ENCODE measurements at regions of chr2 and their contacts with region 1.

Region 1: DNA sequence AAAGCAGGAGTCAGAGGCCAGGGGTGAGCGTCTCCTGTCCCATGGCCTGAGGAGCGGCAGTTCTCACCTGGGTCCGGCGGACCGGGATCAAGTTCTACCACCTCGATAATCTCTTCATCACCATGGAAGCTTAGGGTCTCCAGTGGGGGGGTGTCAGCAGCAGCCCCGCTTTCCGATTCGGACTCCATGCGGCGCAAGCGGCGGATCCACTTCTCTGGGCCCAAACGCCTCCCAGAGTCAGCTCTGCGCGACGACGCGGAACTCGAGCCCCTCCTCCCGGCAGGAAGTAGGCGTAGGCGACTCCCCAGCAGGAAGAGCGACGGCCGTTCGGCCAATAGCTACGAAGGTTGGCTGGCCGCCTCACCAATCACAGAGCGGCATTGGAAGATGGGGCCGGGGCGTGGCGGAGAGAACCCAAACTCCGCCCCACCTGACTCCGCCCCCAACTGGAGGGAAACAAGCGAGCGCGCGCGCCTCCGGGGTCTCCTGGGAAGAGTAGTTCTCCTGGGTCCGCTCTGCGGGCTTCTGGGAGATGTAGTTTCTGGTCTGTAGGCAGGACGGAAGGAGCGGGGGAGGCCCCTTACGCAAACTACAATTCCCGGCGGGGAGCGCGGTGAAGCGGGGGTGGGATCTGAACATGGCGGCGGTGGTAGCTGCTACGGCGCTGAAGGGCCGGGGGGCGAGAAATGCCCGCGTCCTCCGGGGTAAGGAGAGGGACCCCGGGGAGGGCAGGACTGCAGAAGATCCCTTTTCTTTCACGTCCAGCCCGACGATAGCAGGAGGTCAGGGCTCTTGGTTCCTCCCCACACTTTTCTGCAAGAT is at the starts of genes AAMP and PNKD:
- DNase-seq: peak; percentile 100
- ATAC-seq: peak; percentile 92 to 96 (median 94)
- H3K4me3 ChIP-seq: peak within 1 kb of the TSS; percentile 54 to 95 (median 87)
- H3K27ac ChIP-seq: peak within 1 kb of the TSS; percentile 71 to 88 (median 80)
- H3K4me1 ChIP-seq: peaks cover 3 to 60% (median 43%) of the 10 kb centered on the region in 12 donors
- H3K27me3 ChIP-seq: no peaks in the 10 kb centered on the region
- CTCF ChIP-seq: peak in 8 of 12 donors; percentile 26 to 56 (median 36)
- POLR2A ChIP-seq: peak; percentile 15 to 89
- total RNA-seq, gene AAMP: 51.6 to 127 (median 58.0) TPM
- total RNA-seq, gene PNKD: 53.8 to 78.7 (median 72.5) TPM

Region 2: DNA sequence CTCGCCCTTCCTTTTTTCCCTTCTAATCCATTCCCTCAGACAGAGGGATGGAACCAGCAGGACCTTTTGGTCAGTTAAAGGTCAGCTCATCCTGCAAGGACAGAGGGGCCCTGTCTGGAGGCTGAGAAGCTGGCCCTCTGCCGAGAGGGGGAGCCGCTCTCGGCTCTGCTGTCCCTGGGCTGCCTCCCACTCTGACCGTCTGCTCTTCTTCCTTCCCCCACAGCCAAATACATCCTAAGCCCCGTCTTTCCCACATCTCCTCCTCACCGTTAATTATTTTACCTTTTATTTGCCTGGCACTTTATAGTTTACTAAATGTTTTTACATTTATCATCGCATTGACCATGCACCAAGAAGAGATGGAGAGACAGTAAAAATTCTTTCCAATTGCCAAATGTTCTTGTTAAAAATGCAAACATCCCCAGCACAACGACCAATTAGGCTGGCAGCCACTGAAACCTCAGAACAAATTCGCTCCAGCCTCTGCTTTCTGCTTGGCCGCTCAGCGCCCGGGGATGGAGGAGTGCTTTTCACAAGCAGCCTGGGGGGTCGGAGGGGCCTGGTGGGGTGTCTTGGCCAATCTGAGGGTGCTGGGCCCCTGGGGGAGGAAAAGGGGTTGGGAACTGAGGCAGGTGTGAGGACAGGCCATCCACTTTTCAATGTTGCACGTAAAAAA is 391.1 kb before region 1 on chr2:
- intact Hi-C with region 1: no loop called
- DNase-seq: no peak
- ATAC-seq: peak in 1 of 4 donors; percentile 21
- H3K4me3 ChIP-seq: no peak overlapping the region
- H3K27ac ChIP-seq: peak overlapping the region in 9 of 12 donors; percentile 14 to 74 (median 48)
- H3K4me1 ChIP-seq: peaks cover 0 to 80% (median 34%) of the 10 kb centered on the region in 12 donors
- H3K27me3 ChIP-seq: no peaks in the 10 kb centered on the region
- CTCF ChIP-seq: no peak
- POLR2A ChIP-seq: no peak

Region 3: DNA sequence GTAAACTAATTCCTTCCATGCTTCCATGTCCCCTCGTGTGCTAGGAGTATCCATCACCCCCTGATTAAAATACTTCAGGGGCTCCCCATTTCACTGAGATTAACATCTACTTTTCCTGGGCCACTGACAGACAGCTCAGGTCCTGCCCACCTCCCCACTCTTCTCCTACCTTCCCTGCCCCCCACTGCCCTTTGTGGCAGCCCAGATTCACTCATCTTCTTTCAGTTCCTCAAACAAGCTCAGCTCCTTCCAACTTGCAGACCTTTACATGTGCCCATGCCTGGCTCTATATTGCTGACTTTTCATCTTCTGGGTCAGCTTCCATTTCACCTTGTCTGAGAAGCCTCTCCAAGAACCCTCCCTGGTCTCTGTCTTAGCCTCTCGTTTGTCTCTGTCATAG is 189.0 kb before region 1 on chr2:
- intact Hi-C with region 1: no loop called
- DNase-seq: no peak
- ATAC-seq: no peak
- H3K4me3 ChIP-seq: no peak overlapping the region
- H3K27ac ChIP-seq: no peak overlapping the region
- H3K4me1 ChIP-seq: no peaks in the 10 kb centered on the region
- H3K27me3 ChIP-seq: peaks cover 0 to 3% (median 0%) of the 10 kb centered on the region in 9 donors
- CTCF ChIP-seq: no peak
- POLR2A ChIP-seq: no peak

Region 4: DNA sequence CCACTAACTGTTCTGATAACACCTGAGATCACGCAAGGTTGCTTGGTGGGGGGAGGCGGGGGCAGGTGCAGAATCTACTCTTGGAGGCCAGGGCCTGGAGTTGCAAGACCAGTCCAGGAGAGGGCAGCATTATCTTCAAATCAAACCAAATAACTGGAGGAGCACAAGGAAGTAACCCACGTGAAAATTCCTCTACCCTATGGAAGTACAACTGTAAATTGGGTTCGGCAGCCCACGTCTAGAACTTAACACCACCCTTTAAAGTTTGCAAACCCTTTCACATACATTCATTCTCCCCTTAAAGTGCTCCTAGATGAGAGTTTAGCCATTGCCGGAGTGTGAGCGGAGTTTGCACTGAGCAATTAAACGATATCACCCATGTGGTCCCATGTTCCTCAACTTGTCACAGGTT is 83.7 kb before region 1 on chr2:
- intact Hi-C with region 1: loop called in 4 of 10 experiments (anchors 2 to 5 kb)
- DNase-seq: peak in 4 of 5 donors; percentile 46 to 66 (median 58)
- ATAC-seq: peak; percentile 80 to 94 (median 92)
- H3K4me3 ChIP-seq: peak overlapping the region in 1 of 12 donors; percentile 19
- H3K27ac ChIP-seq: peak overlapping the region in 1 of 12 donors; percentile 52
- H3K4me1 ChIP-seq: peaks cover 0 to 11% (median 2%) of the 10 kb centered on the region in 12 donors
- H3K27me3 ChIP-seq: no peaks in the 10 kb centered on the region
- CTCF ChIP-seq: peak; percentile 69 to 85 (median 80)
- POLR2A ChIP-seq: no peak

Region 5: GRCh38 chr2:218223046-218223445 is 47.1 kb before region 1 on chr2:
- intact Hi-C with region 1: loop called in 2 of 10 experiments (anchors 1 to 10 kb)
- DNase-seq: no peak
- ATAC-seq: peak in 1 of 4 donors; percentile 35
- H3K4me3 ChIP-seq: peak overlapping the region in 1 of 12 donors; percentile 18
- H3K27ac ChIP-seq: peak overlapping the region in 1 of 12 donors; percentile 38
- H3K4me1 ChIP-seq: peaks cover 0 to 98% (median 50%) of the 10 kb centered on the region in 12 donors
- H3K27me3 ChIP-seq: no peaks in the 10 kb centered on the region
- CTCF ChIP-seq: no peak
- POLR2A ChIP-seq: no peak

Region 6: DNA sequence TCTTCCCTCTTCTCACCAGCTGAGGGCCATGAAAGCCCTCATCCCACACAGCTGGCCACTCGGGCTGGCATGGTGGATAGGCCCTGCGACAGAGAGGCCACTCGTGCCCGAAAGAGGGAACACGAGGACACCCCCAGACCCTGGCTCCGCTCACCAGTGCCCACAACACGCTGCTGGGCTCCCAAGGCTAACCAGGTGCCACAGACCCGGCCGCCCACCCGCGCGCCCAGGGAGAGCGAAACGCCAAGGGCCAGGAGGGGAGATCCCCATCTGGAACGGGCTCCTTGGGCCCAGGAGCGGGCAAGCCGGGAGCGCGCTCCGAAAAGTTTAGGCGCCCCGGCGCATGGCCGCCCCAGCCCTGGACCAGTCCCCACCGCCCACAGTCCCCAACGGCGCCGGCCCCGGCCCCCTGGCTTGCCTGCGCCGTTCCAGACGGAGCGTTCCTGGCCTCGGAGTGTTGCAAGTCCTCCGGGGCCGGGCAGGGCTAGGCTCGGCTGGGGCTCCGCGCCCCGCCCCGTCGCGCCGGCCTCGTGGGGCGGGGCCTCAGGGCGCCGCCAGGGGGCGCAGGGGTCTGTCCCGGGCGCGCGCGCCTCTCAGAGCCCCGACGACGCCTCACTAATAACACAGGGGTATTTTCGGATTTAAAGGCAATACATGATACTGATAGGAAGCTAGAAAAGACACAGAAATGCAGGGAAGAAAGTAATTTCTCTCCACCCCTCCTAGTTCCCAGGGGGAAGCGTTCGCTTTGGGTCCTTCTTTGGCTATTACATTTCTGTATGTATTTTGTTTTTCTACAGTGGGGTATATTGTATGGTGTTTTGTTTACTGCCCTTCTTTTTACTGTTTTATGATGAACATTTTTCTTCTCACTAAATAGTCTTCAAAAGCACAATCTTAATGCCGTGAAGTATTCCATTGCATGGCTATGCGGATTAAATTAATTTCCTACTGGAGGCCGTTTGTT is 22.2 kb after region 1 on chr2 and contains the start of gene TMBIM1:
- intact Hi-C with region 1: loop called in 6 of 10 experiments (anchors 1 to 2 kb)
- DNase-seq: peak; percentile 83 to 92 (median 87)
- ATAC-seq: peak; percentile 68 to 92 (median 86)
- H3K4me3 ChIP-seq: peak within 1 kb of the TSS; percentile 74 to 98 (median 90)
- H3K27ac ChIP-seq: peak within 1 kb of the TSS; percentile 90 to 100 (median 96)
- H3K4me1 ChIP-seq: peaks cover 2 to 71% (median 49%) of the 10 kb centered on the region in 12 donors
- H3K27me3 ChIP-seq: no peaks in the 10 kb centered on the region
- CTCF ChIP-seq: peak; percentile 63 to 99 (median 96)
- POLR2A ChIP-seq: peak; percentile 50 to 93
- total RNA-seq, gene TMBIM1: 89.1 to 173 (median 126) TPM

Region 7: DNA sequence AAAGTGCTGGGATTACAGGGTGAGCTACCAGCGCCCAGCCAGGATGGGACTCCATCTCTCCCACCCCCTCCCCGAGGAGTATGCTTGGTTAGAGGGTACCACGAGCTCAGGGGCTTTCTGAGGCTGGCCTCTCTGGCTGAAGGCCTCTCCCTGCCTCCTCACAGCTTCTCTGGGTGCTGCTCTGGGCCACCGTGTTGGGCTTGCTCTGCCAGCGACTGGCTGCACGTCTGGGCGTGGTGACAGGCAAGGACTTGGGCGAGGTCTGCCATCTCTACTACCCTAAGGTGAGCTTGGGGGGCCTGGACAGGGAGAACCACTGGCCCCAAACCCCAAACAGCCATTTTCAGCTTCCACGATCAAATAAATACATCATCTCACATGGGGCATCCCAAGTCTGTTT is 114.9 kb after region 1 on chr2:
- intact Hi-C with region 1: no loop called
- DNase-seq: peak in 1 of 5 donors; percentile 27
- ATAC-seq: no peak
- H3K4me3 ChIP-seq: peak overlapping the region in 1 of 12 donors; percentile 51
- H3K27ac ChIP-seq: no peak overlapping the region
- H3K4me1 ChIP-seq: peaks cover 0 to 23% (median 5%) of the 10 kb centered on the region in 12 donors
- H3K27me3 ChIP-seq: no peaks in the 10 kb centered on the region
- CTCF ChIP-seq: no peak
- POLR2A ChIP-seq: no peak

Region 8: DNA sequence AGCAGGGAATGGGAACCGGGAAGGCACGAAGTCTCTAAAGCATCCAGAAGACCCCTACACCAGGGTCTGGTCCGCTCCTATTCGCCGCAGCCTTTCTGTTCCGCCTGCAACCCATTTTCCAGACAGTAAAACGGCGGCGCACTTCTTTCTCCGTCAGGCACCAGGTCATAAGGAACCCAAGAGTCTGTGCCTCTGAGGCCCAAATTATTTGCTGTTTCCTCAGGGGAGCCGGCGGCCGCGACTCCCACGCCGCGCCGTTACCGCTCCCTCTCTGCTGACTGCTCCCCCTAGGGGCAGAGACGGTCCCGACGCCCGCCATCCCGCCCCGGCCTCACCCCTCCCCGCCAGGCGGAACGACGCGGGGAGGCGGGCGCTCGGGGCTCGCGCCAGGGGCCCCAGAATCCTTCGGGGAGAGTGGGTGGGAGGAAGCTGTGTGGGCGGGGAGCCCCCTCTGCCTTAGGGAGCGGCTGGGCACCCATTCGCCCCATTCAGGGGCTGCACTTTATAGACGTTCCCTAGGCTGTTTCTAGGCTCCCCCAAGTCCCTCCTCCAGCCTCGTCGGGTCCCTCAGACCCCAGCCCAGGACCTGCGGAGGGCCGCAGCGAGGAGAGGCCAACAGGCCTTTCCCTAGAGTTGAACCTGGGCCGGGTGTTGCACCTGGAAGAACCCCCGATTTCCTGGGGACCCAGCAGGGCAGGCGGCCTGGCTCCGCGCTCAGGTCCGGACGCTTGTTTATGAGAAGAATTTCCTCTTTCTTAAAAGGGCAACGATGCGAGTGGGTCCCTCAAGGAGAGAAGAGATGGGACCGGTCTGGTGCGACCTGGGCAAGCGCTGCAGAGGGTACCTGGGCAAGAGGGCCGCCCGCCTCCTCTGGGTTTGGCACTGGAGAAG is 125.9 kb after region 1 on chr2:
- intact Hi-C with region 1: loop called in 6 of 10 experiments (anchors 1 to 5 kb)
- DNase-seq: peak; percentile 95 to 98 (median 95)
- ATAC-seq: peak; percentile 70 to 80 (median 74)
- H3K4me3 ChIP-seq: peak overlapping the region; percentile 63 to 100 (median 96)
- H3K27ac ChIP-seq: peak overlapping the region; percentile 99 to 100 (median 100)
- H3K4me1 ChIP-seq: peaks cover 0 to 52% (median 28%) of the 10 kb centered on the region in 12 donors
- H3K27me3 ChIP-seq: no peaks in the 10 kb centered on the region
- CTCF ChIP-seq: peak; percentile 83 to 99 (median 94)
- POLR2A ChIP-seq: peak in 1 of 2 donors; percentile 59